MCF 10A (cell line): ENCODE measurements at regions of chr1 and their contacts with region 1.

Region 1: DNA sequence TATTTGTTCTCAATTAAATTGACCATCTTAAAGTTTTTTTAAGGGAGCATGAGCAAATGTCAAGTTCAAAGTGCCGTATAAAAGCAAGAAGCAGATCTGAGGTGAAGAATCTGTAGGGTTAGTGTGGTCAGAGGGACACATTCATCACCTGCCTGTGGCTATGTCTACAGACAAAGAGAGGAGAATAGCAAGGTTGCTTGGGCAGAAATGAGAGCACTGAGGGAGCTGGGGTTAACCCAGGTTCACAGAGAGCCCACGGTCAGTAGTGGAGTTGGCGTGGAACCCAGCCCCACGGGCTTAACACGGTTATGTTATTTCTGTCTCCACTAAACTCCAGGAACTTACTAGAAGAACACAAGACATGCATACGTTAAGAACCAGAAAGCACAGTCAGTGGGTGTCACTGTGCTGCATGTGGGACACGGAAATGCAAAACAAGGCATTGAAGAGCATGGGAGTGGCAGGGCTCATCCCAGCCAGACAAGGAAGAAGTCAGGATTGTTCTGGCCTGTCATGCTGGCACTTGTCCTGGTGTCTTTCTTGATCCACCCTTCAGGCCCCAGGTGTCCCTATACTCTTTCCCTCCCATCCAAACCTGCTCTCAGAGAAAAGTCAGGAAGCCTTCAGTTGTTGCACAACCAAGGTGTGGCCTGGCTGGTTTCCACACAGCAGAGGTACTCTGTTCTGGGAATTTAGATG is 95.5 kb upstream of the IVNS1ABP start:
- DNase-seq: peak; percentile 93
- H3K4me3 Mint-ChIP-seq: no peak overlapping the region
- H3K27ac Mint-ChIP-seq: peak overlapping the region; percentile 14
- H3K4me1 Mint-ChIP-seq: peaks cover 32% of the 10 kb centered on the region
- H3K27me3 Mint-ChIP-seq: no peaks in the 10 kb centered on the region
- CTCF ChIP-seq: no peak

Region 2: GRCh38 chr1:184407816-184408537 is 1004.6 kb before region 1 on chr1:
- CTCF ChIA-PET with region 1: no interaction called
- POLR2A ChIA-PET with region 1: no interaction called
- intact Hi-C with region 1: no loop called
- DNase-seq: peak; percentile 34
- H3K4me3 Mint-ChIP-seq: no peak overlapping the region
- H3K27ac Mint-ChIP-seq: peak overlapping the region; percentile 44
- H3K4me1 Mint-ChIP-seq: peaks cover 39% of the 10 kb centered on the region
- H3K27me3 Mint-ChIP-seq: no peaks in the 10 kb centered on the region
- CTCF ChIP-seq: no peak

Region 3: DNA sequence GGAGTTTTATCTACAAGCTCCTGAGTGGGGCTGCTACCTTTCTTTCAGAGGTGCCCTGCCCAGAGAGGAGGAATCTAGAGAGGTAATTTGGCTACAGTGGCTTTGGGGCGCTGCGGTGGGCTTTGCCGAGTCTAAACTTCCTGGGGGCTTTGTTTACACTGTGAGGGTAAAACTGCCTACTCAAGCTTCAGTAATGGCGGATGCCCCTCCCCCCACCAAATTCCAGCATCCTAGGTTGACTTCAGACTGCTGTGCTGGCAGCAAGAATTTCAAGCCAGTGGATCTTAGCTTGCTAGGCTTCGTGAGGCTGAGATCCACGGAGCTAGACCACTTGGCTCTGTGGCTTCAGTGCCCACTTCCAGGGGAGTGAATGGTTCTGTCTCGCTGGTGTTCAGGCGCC is 211.6 kb before region 1 on chr1:
- CTCF ChIA-PET with region 1: no interaction called
- POLR2A ChIA-PET with region 1: no interaction called
- intact Hi-C with region 1: no loop called
- DNase-seq: no peak
- H3K4me3 Mint-ChIP-seq: no peak overlapping the region
- H3K27ac Mint-ChIP-seq: no peak overlapping the region
- H3K4me1 Mint-ChIP-seq: no peaks in the 10 kb centered on the region
- H3K27me3 Mint-ChIP-seq: no peaks in the 10 kb centered on the region
- CTCF ChIP-seq: no peak

Region 4: DNA sequence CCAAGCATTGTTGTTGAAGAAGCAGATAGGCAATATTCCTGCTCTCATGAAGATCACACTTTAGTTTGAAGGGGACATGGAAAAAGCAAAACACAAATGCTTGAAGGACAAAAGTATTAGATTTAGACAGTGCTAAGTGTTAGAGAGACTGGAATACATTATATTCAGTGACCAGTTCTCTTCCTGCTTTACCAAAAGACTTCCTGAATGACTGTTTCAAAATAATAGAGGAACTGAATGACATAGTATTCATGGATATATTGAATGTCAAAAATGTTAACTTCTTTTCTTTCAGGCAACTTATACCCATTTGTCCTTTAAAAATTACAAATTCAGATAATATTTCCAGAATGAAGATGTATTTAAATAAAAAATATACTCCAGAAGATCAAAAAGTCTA is 82.5 kb after region 1 on chr1:
- CTCF ChIA-PET with region 1: no interaction called
- POLR2A ChIA-PET with region 1: interaction called, 3 read pairs
- intact Hi-C with region 1: loop called (anchors 10 kb)
- DNase-seq: no peak
- H3K4me3 Mint-ChIP-seq: no peak overlapping the region
- H3K27ac Mint-ChIP-seq: no peak overlapping the region
- H3K4me1 Mint-ChIP-seq: peaks cover 4% of the 10 kb centered on the region
- H3K27me3 Mint-ChIP-seq: no peaks in the 10 kb centered on the region
- CTCF ChIP-seq: no peak

Region 5: DNA sequence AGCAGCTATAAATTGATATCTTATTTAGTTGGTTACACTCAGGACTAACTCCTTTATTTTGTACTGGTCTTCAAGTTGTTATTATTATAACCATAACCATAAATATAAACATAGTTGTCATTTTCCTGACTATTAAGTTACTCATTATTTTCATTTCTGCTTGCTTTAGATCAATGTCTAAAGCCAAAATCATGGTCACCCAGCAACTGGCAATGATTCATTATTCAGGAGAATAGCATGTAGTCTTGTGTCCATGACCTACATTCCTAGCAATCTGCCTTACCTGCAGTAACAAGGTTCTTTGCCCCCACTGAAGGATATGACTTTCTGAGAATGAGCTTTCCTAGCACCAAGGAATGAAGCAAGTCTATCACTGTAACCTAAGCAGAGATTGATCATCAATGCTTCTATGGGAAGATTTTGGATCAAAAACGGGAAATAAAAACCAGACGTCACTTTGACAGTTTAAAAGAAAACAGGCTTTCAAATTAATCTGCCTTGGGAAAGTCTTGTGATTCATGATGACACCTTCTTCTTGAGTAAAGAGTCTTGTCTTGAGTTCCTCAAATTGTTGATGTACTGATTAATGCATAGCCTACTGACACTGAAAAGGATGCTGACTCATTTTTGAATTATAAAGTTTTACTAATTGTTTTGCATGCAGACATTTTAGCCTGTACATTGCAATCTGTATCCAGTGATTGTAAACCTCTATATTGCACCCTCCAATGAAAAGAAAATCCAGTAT is 107.8 kb after region 1 on chr1:
- CTCF ChIA-PET with region 1: no interaction called
- POLR2A ChIA-PET with region 1: no interaction called
- intact Hi-C with region 1: no loop called
- DNase-seq: peak; percentile 30
- H3K4me3 Mint-ChIP-seq: no peak overlapping the region
- H3K27ac Mint-ChIP-seq: peak overlapping the region; percentile 68
- H3K4me1 Mint-ChIP-seq: peaks cover 12% of the 10 kb centered on the region
- H3K27me3 Mint-ChIP-seq: no peaks in the 10 kb centered on the region
- CTCF ChIP-seq: no peak